Dorsolateral prefrontal cortex (tissue), 120 donors: ENCODE measurements at regions of chr6 and their contacts with region 1.

Region 1: GRCh38 chr6:10429638-10430427 is 15.0 kb upstream of the TFAP2A start:
- DNase-seq: peak in 1 of 10 donors; percentile 54
- H3K4me3 ChIP-seq: no peak overlapping the region
- H3K27ac ChIP-seq: no peak overlapping the region
- H3K27me3 ChIP-seq: peaks cover 0 to 38% (median 23%) of the 10 kb centered on the region in 45 donors
- CTCF ChIP-seq: peak; percentile 13 to 86 (median 68)

Region 2: GRCh38 chr6:8549074-8549790 is 1880.6 kb before region 1 on chr6:
- intact Hi-C with region 1: loop called in 1 of 2 experiments (anchors 10 kb)
- DNase-seq: no peak
- H3K4me3 ChIP-seq: no peak overlapping the region
- H3K27ac ChIP-seq: no peak overlapping the region
- H3K27me3 ChIP-seq: no peaks in the 10 kb centered on the region
- CTCF ChIP-seq: no peak

Region 3: DNA sequence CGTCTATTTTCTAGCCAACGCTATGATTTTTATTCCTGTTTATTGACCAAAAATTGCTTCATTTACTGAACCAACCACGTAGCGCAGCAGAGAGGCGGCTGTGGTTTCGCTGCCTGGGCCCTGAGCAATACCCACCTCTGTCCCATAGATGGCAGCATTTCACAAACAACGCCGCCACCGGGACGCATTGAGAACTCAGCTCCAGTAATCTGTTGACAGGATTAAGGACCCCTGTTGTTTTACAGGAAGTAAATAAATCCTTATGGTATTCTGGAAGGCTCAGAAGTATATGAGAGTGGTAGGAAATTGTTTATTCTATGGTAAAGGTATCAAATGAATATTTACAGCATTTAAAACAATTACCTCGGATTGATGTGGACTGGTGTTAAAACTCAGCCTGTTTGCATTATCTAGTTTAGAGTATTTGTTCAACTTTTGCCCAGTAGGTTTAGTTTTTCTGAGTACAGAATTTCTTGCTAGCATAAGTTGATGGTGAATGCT is 1446.6 kb before region 1 on chr6:
- intact Hi-C with region 1: loop called (anchors 5 kb)
- DNase-seq: peak; percentile 36 to 76 (median 59)
- H3K4me3 ChIP-seq: peak overlapping the region in 12 of 59 donors; percentile 1 to 29 (median 11)
- H3K27ac ChIP-seq: no peak overlapping the region
- H3K27me3 ChIP-seq: peaks cover 0 to 10% (median 0%) of the 10 kb centered on the region in 45 donors
- CTCF ChIP-seq: peak; percentile 70 to 98 (median 93)

Region 4: GRCh38 chr6:9250852-9251251 is 1179.0 kb before region 1 on chr6:
- intact Hi-C with region 1: loop called in 1 of 2 experiments (anchors 5 kb)
- DNase-seq: peak in 3 of 10 donors; percentile 19 to 37 (median 27)
- H3K4me3 ChIP-seq: no peak overlapping the region
- H3K27ac ChIP-seq: no peak overlapping the region
- H3K27me3 ChIP-seq: peaks cover 0 to 18% (median 0%) of the 10 kb centered on the region in 45 donors
- CTCF ChIP-seq: peak in 43 of 56 donors; percentile 20 to 58 (median 37)

Region 5: DNA sequence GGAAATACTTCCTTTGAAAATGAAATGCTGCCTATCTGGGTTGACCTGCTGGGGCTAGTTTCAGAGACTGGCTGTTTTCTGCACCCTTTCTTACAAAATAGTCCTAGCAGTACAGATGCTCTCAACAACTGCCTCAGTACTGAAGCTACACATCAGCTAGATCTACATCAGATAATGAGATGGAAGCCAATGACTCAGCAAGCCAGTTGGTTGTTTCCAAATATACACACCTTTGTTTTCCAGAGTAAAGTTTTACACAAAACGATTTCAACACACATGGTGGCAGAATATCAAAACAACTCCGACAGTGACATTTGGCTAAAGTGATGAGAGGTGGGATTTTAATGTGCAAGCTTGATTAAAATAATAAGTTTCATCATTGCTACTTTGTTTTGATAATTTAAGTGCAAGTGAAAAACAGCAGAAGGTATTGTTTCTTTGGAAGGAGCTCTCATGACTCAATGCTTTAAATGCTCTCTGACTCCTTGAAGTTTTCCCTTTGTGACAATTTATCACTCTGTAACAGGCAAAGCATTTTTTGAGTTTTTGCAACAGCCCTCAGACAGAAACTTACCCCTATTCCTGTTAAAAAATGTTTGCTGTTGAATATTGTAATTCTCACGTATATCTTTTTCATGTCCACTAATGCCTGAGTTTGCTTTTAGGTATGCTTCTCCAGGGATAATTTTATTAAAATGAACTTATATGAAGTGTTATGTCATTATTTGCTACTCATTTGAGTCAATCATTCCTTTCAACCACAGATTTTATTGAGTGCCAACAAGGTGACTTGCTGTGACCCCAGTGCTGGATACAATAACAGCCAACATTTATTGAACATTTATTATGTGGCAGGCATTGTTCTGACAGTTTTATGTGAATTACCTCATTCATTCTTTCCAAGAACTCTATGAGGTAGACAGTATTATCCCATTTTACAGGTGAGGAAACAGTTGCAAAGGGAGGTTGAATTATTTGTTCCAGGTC is 897.0 kb before region 1 on chr6:
- intact Hi-C with region 1: loop called in 1 of 2 experiments (anchors 5 kb)
- DNase-seq: no peak
- H3K4me3 ChIP-seq: no peak overlapping the region
- H3K27ac ChIP-seq: no peak overlapping the region
- H3K27me3 ChIP-seq: no peaks in the 10 kb centered on the region
- CTCF ChIP-seq: no peak

Region 6: GRCh38 chr6:9540534-9541126 is 889.2 kb before region 1 on chr6:
- intact Hi-C with region 1: loop called in 1 of 2 experiments (anchors 5 kb)
- DNase-seq: no peak
- H3K4me3 ChIP-seq: no peak overlapping the region
- H3K27ac ChIP-seq: no peak overlapping the region
- H3K27me3 ChIP-seq: peaks cover 0 to 14% (median 0%) of the 10 kb centered on the region in 45 donors
- CTCF ChIP-seq: peak; percentile 13 to 83 (median 68)

Region 7: GRCh38 chr6:10030942-10031537 is 398.8 kb before region 1 on chr6:
- intact Hi-C with region 1: loop called in 1 of 2 experiments (anchors 5 kb)
- DNase-seq: no peak
- H3K4me3 ChIP-seq: no peak overlapping the region
- H3K27ac ChIP-seq: no peak overlapping the region
- H3K27me3 ChIP-seq: peaks cover 0 to 53% (median 4%) of the 10 kb centered on the region in 45 donors
- CTCF ChIP-seq: peak; percentile 44 to 81 (median 66)

Region 8: GRCh38 chr6:10136636-10137035 is 293.2 kb before region 1 on chr6:
- intact Hi-C with region 1: no loop called
- DNase-seq: no peak
- H3K4me3 ChIP-seq: no peak overlapping the region
- H3K27ac ChIP-seq: no peak overlapping the region
- H3K27me3 ChIP-seq: no peaks in the 10 kb centered on the region
- CTCF ChIP-seq: no peak